Activated T-helper 1 cell treated with anti-CD3 and anti-CD28 coated beads, Interleukin-12 subunit alpha, Interleukin-12 subunit beta, Interleukin-2, Interleukin-4 antibody, amounts not matched to agents 30 ng/mL and 10 ng/mL and 1 ng/mL, durations not matched to agents 14 hours and 24 hours and 36 hours (primary cell): ENCODE measurements at regions of chr15 and their contacts with region 1.

Region 1: DNA sequence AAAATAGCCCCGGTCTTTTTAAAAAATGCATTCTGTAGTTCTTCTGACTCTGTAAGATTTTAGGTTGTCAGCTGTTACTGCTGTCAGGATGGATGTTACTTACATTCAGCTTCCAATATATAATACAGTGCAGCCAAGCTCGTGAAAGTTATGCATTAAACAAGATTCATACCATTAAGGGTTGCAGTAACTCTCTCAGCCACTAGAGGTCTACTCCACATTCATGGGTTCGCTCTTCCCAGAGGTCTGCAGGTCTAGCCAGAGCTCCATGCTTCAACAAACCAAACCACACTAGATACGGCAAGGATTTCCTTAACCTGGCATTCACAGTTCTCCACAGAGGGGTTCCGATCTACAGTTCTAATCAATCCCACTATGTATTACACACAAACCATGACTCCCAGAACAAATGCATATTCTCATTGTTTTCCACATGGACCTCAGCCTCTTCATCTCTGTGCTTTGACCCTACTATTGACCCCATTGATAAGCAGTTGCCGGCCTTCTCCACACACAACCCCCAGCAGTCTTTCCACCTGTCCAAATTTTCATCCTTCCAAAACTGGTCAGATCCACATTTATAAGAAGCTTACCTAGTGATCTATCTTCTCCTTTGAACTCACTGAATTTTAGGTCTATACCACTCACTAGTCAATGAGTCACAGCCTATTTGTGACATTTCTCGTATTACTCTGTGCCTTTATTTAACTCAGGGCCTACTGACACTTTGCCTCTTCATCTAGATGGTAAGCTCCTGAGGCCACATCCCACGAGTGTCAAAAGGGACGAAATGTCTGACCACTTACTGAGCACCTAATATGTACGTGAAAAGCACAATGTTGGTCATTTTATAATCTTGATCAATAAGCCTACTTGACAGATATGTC is 33.7 kb downstream of the RORA start:
- DNase-seq: no peak
- H3K4me3 Mint-ChIP-seq: no peak overlapping the region
- H3K27ac Mint-ChIP-seq: no peak overlapping the region
- H3K4me1 Mint-ChIP-seq: no peaks in the 10 kb centered on the region
- H3K27me3 Mint-ChIP-seq: peaks cover 13% of the 10 kb centered on the region

Region 2: GRCh38 chr15:61621146-61621545 is 425.8 kb after region 1 on chr15:
- intact Hi-C with region 1: loop called (anchors 10 kb)
- DNase-seq: no peak
- H3K4me3 Mint-ChIP-seq: no peak overlapping the region
- H3K27ac Mint-ChIP-seq: no peak overlapping the region
- H3K4me1 Mint-ChIP-seq: no peaks in the 10 kb centered on the region
- H3K27me3 Mint-ChIP-seq: no peaks in the 10 kb centered on the region